ENCODE measurements at regions of chr6 and their contacts with region 1.

Region 1: DNA sequence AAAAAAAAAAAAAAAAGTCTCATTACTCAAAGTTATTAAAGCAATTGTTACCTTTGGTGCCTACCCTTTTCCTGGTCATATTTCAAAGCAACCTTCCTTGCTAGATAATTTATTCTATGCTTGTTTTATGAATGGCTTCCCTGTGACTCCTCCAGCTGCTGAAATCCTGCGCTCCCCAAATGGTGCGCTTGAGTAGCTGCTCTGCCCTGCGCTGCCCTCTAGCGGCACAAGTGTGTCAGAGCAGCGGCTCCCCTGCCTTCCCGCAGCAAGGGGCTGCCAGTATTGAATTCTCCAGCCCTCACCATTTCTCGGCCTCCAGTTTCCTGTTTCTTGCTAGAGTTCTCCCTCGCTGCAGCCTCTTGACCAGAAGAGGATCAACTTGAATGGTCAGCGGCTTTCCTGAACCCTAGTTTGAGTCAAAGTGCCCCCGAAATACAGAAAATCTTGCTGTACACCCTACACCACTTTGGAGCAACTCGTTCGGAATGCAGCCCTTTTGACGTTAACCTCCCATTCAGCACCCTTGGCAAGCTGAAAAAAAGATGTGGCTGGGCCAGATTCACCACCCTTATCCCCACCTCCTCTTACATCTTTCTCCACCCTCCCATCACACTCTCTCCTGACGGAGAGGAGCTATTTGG is 60.4 kb upstream of the KLHL31 start:
- DNase-seq: peak; percentile 49 to 92 (median 80)
- ATAC-seq: peak; percentile 83 to 95 (median 92)
- H3K4me3 ChIP-seq: no peak overlapping the region
- H3K27ac ChIP-seq: no peak overlapping the region
- H3K4me1 ChIP-seq: peaks cover 0 to 7% (median 3%) of the 10 kb centered on the region in 3 donors
- H3K27me3 ChIP-seq: no peaks in the 10 kb centered on the region
- CTCF ChIP-seq: peak; percentile 88 to 98 (median 96)

Region 2: GRCh38 chr6:53504512-53504911 is 221.4 kb before region 1 on chr6:
- intact Hi-C with region 1: loop called in 1 of 3 experiments (anchors 10 kb)
- DNase-seq: no peak
- ATAC-seq: peak in 1 of 4 donors; percentile 26
- H3K4me3 ChIP-seq: no peak overlapping the region
- H3K27ac ChIP-seq: no peak overlapping the region
- H3K4me1 ChIP-seq: no peaks in the 10 kb centered on the region
- H3K27me3 ChIP-seq: no peaks in the 10 kb centered on the region
- CTCF ChIP-seq: no peak

Region 3: GRCh38 chr6:53956068-53956711 is 230.3 kb after region 1 on chr6:
- intact Hi-C with region 1: loop called in 1 of 3 experiments (anchors 10 kb)
- DNase-seq: peak in 5 of 6 donors; percentile 29 to 79 (median 60)
- ATAC-seq: peak; percentile 72 to 99 (median 90)
- H3K4me3 ChIP-seq: no peak overlapping the region
- H3K27ac ChIP-seq: no peak overlapping the region
- H3K4me1 ChIP-seq: no peaks in the 10 kb centered on the region
- H3K27me3 ChIP-seq: no peaks in the 10 kb centered on the region
- CTCF ChIP-seq: peak in 3 of 4 donors; percentile 22 to 67 (median 25)

Measured in pancreas (tissue), 10 donors.